Activated B cell treated with CpG ODN at 0.5 μM for 24 hours (primary cell): ENCODE measurements at regions of chr16 and their contacts with region 1.

Region 1: GRCh38 chr16:16007743-16008111 is 58.3 kb downstream of the ABCC1 start:
- DNase-seq: peak; percentile 42
- ATAC-seq: peak; percentile 82
- H3K4me3 Mint-ChIP-seq: peak overlapping the region; percentile 73
- H3K27ac Mint-ChIP-seq: peak overlapping the region; percentile 99
- H3K4me1 Mint-ChIP-seq: peaks cover 45% of the 10 kb centered on the region
- H3K27me3 Mint-ChIP-seq: no peaks in the 10 kb centered on the region
- CTCF ChIP-seq: no peak

Region 2: GRCh38 chr16:15765880-15766279 is 241.8 kb before region 1 on chr16:
- CTCF ChIA-PET with region 1: no interaction called
- POLR2A ChIA-PET with region 1: no interaction called
- intact Hi-C with region 1: no loop called
- DNase-seq: peak; percentile 22
- ATAC-seq: peak; percentile 99
- H3K4me3 Mint-ChIP-seq: no peak overlapping the region
- H3K27ac Mint-ChIP-seq: no peak overlapping the region
- H3K4me1 Mint-ChIP-seq: peaks cover 3% of the 10 kb centered on the region
- H3K27me3 Mint-ChIP-seq: peaks cover 16% of the 10 kb centered on the region
- CTCF ChIP-seq: no peak

Region 3: DNA sequence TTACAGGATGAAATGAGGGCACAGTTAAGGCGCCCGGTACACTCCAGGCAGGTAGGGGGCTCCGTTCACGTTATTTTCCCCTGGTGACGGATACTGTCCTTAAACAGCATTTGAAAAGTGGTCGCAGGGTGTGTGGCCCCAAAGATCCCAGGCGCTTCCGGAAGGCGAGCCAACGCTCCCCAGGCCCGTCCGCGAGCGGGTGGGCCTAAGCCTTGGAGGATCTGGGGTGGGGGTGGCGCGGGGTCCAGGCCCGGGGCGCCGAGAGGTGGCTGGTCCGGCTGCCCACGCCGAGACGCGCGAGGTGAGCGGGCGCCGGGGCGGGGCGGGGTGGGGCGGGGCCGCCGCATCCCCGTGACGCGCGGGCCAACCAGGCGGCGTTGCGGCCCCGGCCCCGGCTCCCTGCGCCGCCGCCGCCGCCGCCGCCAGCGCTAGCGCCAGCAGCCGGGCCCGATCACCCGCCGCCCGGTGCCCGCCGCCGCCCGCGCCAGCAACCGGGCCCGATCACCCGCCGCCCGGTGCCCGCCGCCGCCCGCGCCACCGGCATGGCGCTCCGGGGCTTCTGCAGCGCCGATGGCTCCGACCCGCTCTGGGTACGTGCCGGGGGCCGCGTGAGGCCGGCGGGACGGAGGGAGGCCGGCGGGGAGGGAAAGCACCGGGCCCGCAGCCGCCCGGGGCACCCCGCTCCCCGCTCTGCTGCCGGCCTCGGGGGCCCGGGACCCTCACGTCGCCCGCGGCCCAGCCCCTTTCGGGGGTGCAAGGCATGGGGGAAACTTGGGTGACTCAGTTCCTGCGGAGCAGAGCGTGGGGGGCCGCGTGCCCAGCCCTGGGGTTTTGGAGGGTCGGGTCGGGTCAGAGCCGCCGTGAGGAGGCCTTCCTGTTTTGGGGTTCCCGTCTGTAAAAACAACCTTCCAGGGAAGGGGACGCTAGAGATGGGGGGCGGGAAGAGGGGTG is 58.2 kb before region 1 on chr16 and contains the start of gene ABCC1:
- CTCF ChIA-PET with region 1: no interaction called
- POLR2A ChIA-PET with region 1: interaction called, 9 read pairs
- intact Hi-C with region 1: loop called (anchors 1 kb)
- DNase-seq: peak; percentile 53
- ATAC-seq: peak; percentile 80
- H3K4me3 Mint-ChIP-seq: peak within 1 kb of the TSS; percentile 93
- H3K27ac Mint-ChIP-seq: peak within 1 kb of the TSS; percentile 91
- H3K4me1 Mint-ChIP-seq: peaks cover 40% of the 10 kb centered on the region
- H3K27me3 Mint-ChIP-seq: no peaks in the 10 kb centered on the region
- CTCF ChIP-seq: no peak
- total RNA-seq, gene ABCC1: 46.5 and 49.8 TPM in 2 replicates

Region 4: DNA sequence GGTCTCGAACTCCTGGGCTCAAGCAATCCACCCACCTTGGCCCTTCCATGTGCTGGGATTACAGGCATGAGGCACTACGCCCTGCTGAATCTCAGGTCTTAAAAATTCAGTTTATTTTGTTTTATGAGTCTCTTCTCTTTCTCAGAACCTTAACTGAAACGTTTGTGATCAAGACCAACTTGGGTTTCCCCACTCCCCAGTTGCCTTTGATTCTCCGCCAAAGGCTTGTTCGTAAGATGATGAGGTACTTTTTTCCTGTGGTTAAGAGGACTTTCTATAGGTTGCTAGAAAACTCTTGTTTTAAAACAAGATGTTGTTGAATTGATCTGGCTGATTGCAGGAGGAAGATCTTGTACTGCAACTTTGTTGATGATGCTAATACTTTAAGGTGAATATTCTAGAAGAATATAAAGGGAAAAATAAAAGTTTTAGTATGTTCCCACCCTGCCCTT is 46.6 kb before region 1 on chr16:
- CTCF ChIA-PET with region 1: no interaction called
- POLR2A ChIA-PET with region 1: interaction called, 3 read pairs
- intact Hi-C with region 1: loop called (anchors 1 kb)
- DNase-seq: no peak
- ATAC-seq: peak; percentile 86
- H3K4me3 Mint-ChIP-seq: peak overlapping the region; percentile 73
- H3K27ac Mint-ChIP-seq: peak overlapping the region; percentile 87
- H3K4me1 Mint-ChIP-seq: peaks cover 54% of the 10 kb centered on the region
- H3K27me3 Mint-ChIP-seq: no peaks in the 10 kb centered on the region
- CTCF ChIP-seq: no peak

Region 5: GRCh38 chr16:16025214-16025968 is 17.7 kb after region 1 on chr16:
- CTCF ChIA-PET with region 1: no interaction called
- POLR2A ChIA-PET with region 1: interaction called, 5 read pairs
- intact Hi-C with region 1: loop called (anchors 1 kb)
- DNase-seq: no peak
- ATAC-seq: peak; percentile 67
- H3K4me3 Mint-ChIP-seq: no peak overlapping the region
- H3K27ac Mint-ChIP-seq: peak overlapping the region; percentile 63
- H3K4me1 Mint-ChIP-seq: peaks cover 52% of the 10 kb centered on the region
- H3K27me3 Mint-ChIP-seq: no peaks in the 10 kb centered on the region
- CTCF ChIP-seq: no peak

Region 6: GRCh38 chr16:16578701-16579100 is 571.0 kb after region 1 on chr16:
- CTCF ChIA-PET with region 1: no interaction called
- POLR2A ChIA-PET with region 1: no interaction called
- intact Hi-C with region 1: no loop called
- DNase-seq: no peak
- ATAC-seq: no peak
- H3K4me3 Mint-ChIP-seq: no peak overlapping the region
- H3K27ac Mint-ChIP-seq: no peak overlapping the region
- H3K4me1 Mint-ChIP-seq: no peaks in the 10 kb centered on the region
- H3K27me3 Mint-ChIP-seq: peaks cover 3% of the 10 kb centered on the region
- CTCF ChIP-seq: no peak